OCI-LY7 (cell line): ENCODE measurements at regions of chr21 and their contacts with region 1.

Region 1: DNA sequence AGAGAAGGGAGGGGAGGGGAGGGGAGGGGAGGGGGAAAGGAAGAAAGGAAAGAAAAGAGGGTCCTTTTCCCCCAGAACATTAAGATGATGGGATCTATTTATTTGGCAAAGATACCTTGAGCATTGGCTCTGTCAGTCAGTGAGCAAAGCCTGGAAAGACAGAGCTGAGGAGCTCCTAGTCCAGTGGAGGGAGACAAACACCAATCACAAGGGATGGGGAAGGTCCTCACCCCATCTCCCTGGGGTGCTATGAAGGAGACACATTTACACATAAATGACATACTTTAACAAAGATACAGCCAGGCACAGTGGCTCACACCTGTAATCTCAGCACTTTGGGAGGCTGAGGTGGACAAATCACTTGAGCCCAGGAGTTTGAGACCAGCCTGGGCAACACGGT is 154.9 kb upstream of the TIAM1 start:
- DNase-seq: no peak
- H3K4me3 ChIP-seq: no peak overlapping the region
- H3K27ac ChIP-seq: no peak overlapping the region
- H3K4me1 ChIP-seq: no peaks in the 10 kb centered on the region
- CTCF ChIP-seq: no peak

Region 2: GRCh38 chr21:31517664-31518414 is 18.9 kb after region 1 on chr21:
- CTCF ChIA-PET with region 1: no interaction called
- POLR2A ChIA-PET with region 1: interaction called, 10 read pairs
- intact Hi-C with region 1: no loop called
- DNase-seq: no peak
- H3K4me3 ChIP-seq: no peak overlapping the region
- H3K27ac ChIP-seq: no peak overlapping the region
- H3K4me1 ChIP-seq: no peaks in the 10 kb centered on the region
- CTCF ChIP-seq: no peak